GM10248 (cell line): ENCODE measurements at regions of chr15 and their contacts with region 1.

Region 1: GRCh38 chr15:89554247-89554646 is 21.0 kb upstream of the TICRR start:
- DNase-seq: no peak
- CTCF ChIP-seq: no peak

Region 2: DNA sequence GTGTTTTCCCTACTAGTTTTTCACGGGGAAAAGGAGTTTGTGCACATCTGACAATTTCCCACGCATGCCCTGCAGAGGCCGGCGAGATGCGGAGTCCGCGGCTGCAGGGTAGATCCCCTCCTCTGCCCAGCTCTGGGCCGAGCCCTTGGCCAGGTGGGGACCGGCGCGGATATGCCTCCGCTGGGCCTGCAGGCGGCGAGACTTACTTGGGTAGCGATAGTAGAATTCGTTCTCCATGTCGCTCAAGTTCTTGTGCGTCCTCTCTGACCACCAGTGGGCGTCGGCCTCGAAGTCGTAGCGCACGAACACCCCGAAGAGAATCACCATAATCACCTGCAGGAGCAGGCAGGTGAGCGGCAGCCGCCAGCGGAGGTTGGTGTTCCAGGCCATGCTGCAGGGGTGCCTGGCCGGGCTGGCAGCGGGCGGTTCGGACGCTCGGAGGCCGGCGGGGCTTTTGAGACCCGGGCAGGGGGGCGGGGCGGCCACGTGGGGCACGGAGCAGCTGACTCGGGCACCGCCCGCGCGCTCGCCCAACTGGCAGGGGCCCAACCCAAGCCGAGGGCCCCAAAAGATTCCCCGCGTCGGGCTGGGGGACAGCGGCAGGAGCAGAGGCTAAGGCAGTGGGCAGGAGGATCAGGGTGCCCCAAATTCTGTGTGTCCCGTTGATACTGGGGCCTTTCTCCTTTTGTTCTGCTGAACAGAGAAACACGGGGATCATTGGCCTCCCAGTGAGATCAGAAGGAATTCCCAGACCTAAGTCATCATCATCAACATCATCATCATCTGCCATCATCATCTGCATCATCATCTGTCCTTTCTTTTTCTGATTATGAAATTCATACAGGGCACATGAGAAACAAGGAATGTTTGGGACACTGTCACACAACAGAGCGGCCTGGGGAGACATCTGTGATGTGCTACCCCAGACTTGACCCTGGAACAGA is 57.8 kb before region 1 on chr15 and contains the start of gene RHCG:
- CTCF ChIA-PET with region 1: interaction called, 15 read pairs
- POLR2A ChIA-PET with region 1: no interaction called
- DNase-seq: peak; percentile 43
- CTCF ChIP-seq: peak; percentile 15